Activated CD4-positive, alpha-beta T cell treated with anti-CD3 and anti-CD28 coated beads for 36 hours (primary cell): ENCODE measurements at regions of chr17 and their contacts with region 1.

Region 1: DNA sequence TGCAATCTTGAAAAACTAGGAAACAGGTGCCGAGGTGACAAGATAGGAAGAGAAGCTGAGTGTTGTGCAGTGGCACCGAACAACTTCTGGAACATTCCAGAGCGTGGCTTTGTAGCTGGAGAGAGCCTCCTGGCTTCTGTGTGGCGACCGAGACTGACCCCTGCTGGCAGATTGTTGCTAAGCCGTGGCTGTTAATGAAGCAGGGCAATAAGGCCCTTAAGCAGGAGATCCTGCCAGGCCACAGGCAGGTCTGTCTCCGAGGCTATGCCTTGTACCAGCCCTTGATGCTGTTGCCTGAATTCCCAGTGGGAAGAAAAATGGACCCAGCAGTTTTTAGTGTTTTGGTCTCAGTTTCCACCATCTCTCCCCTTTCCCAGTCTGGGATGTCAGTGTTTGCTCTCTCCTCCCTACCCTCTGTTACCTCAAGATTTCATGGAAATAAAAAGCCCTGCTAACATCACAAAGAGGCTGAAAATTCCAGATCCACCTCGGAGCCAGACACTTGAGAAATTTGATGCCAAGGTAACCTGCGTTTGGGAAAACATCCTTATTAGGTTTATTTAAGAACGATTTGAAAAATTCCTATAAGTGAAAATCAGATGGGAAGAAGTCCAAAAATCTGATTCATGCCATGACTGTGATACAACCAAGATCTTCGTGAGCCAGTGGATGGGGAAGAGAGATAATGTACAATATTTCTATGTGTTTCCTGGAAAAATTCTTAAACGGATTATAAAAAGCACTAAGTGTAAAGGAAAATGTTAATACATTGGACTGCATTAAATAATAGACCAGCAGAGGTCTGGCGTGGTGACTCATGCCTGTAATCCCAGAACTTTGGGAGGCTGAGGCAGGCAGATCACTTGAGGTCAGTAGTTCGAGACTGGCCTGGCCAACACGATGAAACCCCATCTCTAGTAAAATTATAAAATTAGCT is 265.1 kb downstream of the PRKCA start:
- DNase-seq: peak; percentile 90
- ATAC-seq: peak; percentile 88
- H3K4me3 Mint-ChIP-seq: no peak overlapping the region
- H3K27ac Mint-ChIP-seq: peak overlapping the region; percentile 31
- H3K4me1 Mint-ChIP-seq: peaks cover 40% of the 10 kb centered on the region
- H3K27me3 Mint-ChIP-seq: no peaks in the 10 kb centered on the region

Region 2: DNA sequence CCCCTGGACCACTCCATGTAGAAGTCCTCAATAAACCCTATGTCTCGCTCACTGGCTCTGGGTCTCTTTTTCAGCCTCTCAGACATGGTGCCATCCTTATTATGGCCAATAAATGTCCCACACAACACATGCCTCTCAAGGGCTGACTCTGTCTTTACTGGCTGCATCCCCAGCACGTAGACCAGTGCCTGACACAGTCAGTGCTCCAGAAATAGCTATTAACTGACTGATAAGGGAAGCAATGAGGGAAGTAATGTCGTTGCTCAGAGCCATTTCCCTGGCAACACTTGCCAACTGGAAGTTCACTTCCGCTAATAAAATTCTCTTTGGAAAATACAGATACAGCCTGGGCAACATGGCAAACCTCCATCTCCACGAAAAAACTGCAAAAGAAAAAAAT is 319.2 kb before region 1 on chr17:
- CTCF ChIA-PET with region 1: interaction called, 10 read pairs
- POLR2A ChIA-PET with region 1: no interaction called
- intact Hi-C with region 1: loop called in 1 of 2 experiments (anchors 2 kb)
- DNase-seq: no peak
- ATAC-seq: no peak
- H3K4me3 Mint-ChIP-seq: no peak overlapping the region
- H3K27ac Mint-ChIP-seq: no peak overlapping the region
- H3K4me1 Mint-ChIP-seq: peaks cover 29% of the 10 kb centered on the region
- H3K27me3 Mint-ChIP-seq: no peaks in the 10 kb centered on the region

Region 3: DNA sequence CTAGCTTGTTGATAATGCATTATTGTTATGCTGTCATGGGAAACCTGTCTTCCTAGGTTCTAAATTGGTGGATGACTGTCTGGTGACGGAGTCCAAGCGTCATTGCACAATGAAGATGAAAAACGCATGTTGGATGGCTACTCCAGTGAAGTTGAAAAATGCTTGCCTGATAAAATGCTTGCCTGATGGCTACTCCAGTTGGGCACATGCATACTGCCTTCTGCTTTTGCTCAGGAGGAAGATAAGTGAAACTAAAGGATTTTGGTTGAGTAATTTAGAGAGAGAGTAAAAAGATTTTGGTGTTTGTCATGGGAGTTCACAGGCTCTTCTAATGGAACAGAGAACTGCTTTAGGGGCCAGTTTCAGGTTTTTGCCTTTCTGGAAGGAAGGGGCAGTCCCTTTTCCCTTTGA is 146.5 kb before region 1 on chr17:
- CTCF ChIA-PET with region 1: no interaction called
- POLR2A ChIA-PET with region 1: no interaction called
- intact Hi-C with region 1: loop called (anchors 5 kb)
- DNase-seq: no peak
- ATAC-seq: peak; percentile 60
- H3K4me3 Mint-ChIP-seq: no peak overlapping the region
- H3K27ac Mint-ChIP-seq: no peak overlapping the region
- H3K4me1 Mint-ChIP-seq: peaks cover 75% of the 10 kb centered on the region
- H3K27me3 Mint-ChIP-seq: no peaks in the 10 kb centered on the region

Region 4: DNA sequence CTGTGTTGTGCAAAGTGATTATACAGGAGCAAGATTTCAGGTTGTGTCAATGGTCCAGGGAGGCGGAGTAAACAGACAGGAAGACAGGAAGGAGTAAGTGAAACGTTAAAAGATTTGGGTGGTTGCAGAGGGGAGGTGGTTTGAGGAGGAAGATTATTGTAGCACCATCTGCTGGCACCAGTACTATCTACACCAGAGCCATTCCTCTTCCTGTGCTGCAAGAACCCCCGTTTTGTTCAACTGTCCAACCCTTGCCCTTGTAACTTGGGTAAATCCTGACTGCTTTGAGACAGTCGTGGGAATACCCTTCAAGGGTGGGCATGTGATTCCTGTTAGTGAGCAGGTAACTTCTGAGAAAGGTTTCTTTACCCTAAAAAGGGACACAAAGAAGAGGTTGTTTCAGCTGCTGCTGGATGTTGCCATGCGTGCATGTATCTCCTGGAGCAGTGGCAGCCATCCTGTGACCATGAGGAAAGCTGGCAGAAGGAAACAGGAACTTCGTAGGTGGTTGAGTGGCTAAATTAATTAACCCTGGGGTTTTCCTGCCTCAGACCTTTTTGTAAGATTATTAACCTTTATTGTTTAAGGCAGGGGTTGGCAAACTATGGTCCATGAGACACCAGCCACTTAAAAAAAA is 141.0 kb before region 1 on chr17:
- CTCF ChIA-PET with region 1: interaction called, 7 read pairs
- POLR2A ChIA-PET with region 1: no interaction called
- intact Hi-C with region 1: loop called (anchors 5 kb)
- DNase-seq: peak; percentile 60
- ATAC-seq: peak; percentile 94
- H3K4me3 Mint-ChIP-seq: peak overlapping the region; percentile 4
- H3K27ac Mint-ChIP-seq: peak overlapping the region; percentile 88
- H3K4me1 Mint-ChIP-seq: peaks cover 77% of the 10 kb centered on the region
- H3K27me3 Mint-ChIP-seq: no peaks in the 10 kb centered on the region

Region 5: DNA sequence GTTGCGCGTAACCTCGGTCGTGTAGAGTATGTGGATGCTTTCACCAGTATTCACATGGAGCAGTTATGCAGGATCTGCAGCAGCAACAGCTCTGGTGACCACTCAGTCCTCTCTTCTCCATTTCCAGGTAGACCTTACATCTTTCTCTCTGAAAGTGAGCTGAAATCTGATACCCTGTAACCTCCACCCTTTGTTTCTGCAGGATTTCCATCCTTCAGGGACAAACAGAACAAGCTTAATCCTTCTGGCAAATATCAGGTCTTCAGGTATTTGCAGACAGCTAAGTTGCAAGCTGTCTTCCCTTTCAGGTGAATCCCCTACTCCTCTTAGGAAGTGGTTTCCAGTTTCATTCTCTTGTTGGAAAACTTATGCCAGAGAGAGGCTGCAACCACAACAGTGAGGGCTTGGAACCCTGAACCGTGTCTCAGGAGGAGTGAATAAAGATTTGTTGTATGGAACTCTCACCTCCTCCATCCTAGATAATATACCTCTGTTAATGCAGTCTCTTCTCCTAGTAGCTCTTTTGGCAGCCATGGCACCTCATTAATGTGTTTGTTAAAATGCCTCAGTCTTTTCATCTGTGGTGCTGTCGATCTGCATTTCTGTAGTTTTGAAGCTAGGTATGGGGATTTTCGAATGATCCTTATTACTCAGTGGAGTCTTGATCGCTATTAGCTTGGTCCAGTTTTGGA is 92.5 kb before region 1 on chr17:
- CTCF ChIA-PET with region 1: no interaction called
- POLR2A ChIA-PET with region 1: no interaction called
- intact Hi-C with region 1: no loop called
- DNase-seq: no peak
- ATAC-seq: no peak
- H3K4me3 Mint-ChIP-seq: no peak overlapping the region
- H3K27ac Mint-ChIP-seq: no peak overlapping the region
- H3K4me1 Mint-ChIP-seq: peaks cover 55% of the 10 kb centered on the region
- H3K27me3 Mint-ChIP-seq: no peaks in the 10 kb centered on the region

Region 6: DNA sequence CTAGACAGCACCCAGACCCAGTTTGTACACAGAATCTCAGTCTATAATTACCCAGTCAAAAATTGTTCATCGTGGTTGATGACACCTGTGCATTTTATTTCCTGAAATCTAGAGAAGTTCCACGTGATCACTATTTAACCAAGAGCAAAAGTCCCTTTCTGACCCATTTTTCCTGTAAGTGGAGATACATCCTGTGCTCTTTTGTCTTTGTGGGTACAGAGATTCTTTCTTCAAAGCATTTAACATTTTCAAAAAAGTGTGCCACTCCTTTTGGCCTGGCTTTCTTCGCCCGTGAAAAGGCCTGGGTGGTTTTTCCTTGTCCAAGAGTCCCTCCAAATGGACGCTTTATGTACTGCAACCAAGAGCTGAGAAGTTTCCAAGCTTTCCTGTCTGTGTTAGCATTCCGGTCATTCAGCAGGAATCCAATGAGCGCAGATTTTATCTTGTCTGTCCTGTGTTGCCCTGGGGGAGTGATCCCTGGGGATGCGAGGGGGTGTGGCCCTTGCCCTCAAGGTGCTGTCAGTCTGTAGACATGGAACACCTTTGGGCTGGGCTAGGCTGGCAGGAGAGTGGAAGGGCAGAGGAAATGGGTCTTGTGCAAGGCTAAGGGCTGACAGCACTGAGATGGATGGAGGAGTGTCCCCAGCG is 106.3 kb after region 1 on chr17:
- CTCF ChIA-PET with region 1: interaction called, 4 read pairs
- POLR2A ChIA-PET with region 1: no interaction called
- intact Hi-C with region 1: loop called (anchors 1 to 5 kb)
- DNase-seq: peak; percentile 63
- ATAC-seq: peak; percentile 80
- H3K4me3 Mint-ChIP-seq: peak overlapping the region; percentile 6
- H3K27ac Mint-ChIP-seq: peak overlapping the region; percentile 84
- H3K4me1 Mint-ChIP-seq: peaks cover 61% of the 10 kb centered on the region
- H3K27me3 Mint-ChIP-seq: no peaks in the 10 kb centered on the region

Region 7: GRCh38 chr17:66747578-66748275 is 180.2 kb after region 1 on chr17:
- CTCF ChIA-PET with region 1: no interaction called
- POLR2A ChIA-PET with region 1: no interaction called
- intact Hi-C with region 1: no loop called
- DNase-seq: no peak
- ATAC-seq: no peak
- H3K4me3 Mint-ChIP-seq: no peak overlapping the region
- H3K27ac Mint-ChIP-seq: no peak overlapping the region
- H3K4me1 Mint-ChIP-seq: no peaks in the 10 kb centered on the region
- H3K27me3 Mint-ChIP-seq: no peaks in the 10 kb centered on the region

Region 8: GRCh38 chr17:66906321-66907278 is 339.1 kb after region 1 on chr17:
- CTCF ChIA-PET with region 1: no interaction called
- POLR2A ChIA-PET with region 1: no interaction called
- intact Hi-C with region 1: loop called in 1 of 2 experiments (anchors 10 kb)
- DNase-seq: peak; percentile 86
- ATAC-seq: peak; percentile 64
- H3K4me3 Mint-ChIP-seq: no peak overlapping the region
- H3K27ac Mint-ChIP-seq: no peak overlapping the region
- H3K4me1 Mint-ChIP-seq: peaks cover 5% of the 10 kb centered on the region
- H3K27me3 Mint-ChIP-seq: peaks cover 4% of the 10 kb centered on the region